Uterus (tissue), 4 donors: ENCODE measurements at regions of chr17 and their contacts with region 1.

Region 1: GRCh38 chr17:33091271-33091670 is 99.6 kb downstream of the SPACA3 start:
- DNase-seq: peak in 1 of 2 donors; percentile 30
- H3K4me3 ChIP-seq: no peak overlapping the region
- H3K27ac ChIP-seq: no peak overlapping the region
- H3K4me1 ChIP-seq: no peaks in the 10 kb centered on the region
- H3K27me3 ChIP-seq: no peaks in the 10 kb centered on the region
- CTCF ChIP-seq: no peak
- POLR2A ChIP-seq: no peak

Region 2: GRCh38 chr17:32976131-32976530 is 115.1 kb before region 1 on chr17:
- intact Hi-C with region 1: no loop called
- DNase-seq: no peak
- H3K4me3 ChIP-seq: no peak overlapping the region
- H3K27ac ChIP-seq: no peak overlapping the region
- H3K4me1 ChIP-seq: no peaks in the 10 kb centered on the region
- H3K27me3 ChIP-seq: no peaks in the 10 kb centered on the region
- CTCF ChIP-seq: no peak
- POLR2A ChIP-seq: no peak

Region 3: GRCh38 chr17:33012522-33013033 is 78.7 kb before region 1 on chr17:
- intact Hi-C with region 1: loop called (anchors 10 kb)
- DNase-seq: no peak
- H3K4me3 ChIP-seq: no peak overlapping the region
- H3K27ac ChIP-seq: no peak overlapping the region
- H3K4me1 ChIP-seq: no peaks in the 10 kb centered on the region
- H3K27me3 ChIP-seq: no peaks in the 10 kb centered on the region
- CTCF ChIP-seq: no peak
- POLR2A ChIP-seq: no peak